ENCODE measurements at regions of chr6 and their contacts with region 1.

Region 1: DNA sequence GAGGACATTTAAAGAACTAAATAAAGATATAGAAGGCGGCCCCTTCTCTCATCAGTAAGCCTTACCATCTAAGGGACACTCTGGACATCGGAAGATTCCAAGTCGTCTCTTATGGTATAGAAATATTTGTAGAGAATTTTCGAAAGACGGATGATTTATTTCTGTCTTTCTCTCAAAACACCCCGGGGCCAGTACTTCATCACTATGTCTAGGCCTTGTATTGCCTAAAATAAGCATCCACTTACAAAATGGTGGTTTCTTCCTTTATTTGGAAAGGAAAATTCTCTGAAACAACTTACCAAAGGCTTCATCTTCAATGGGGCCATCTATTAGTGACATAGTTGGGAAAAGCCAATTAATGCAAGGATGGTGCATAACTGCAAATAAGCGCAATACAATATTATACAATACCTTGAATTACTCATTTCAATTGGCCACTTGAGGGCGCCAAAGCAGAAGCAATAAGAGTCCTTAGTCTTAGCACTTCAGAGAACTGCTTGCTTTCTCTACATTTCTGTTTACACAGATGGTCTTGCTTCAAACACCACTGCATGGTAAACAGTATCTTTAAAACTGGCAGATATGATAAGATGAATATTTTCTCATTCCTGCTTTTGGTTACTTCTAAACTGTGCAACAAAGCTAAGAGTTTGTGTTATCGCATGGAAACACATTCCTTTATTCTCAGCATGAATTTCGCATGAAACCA is 113.2 kb downstream of the VIP start:
- DNase-seq: peak in 1 of 2 experiments; percentile 29
- H3K4me3 ChIP-seq: no peak overlapping the region
- H3K27ac ChIP-seq: no peak overlapping the region
- H3K4me1 ChIP-seq: no peaks in the 10 kb centered on the region
- H3K27me3 ChIP-seq: no peaks in the 10 kb centered on the region
- CTCF ChIP-seq: peak; percentile 84

Region 2: DNA sequence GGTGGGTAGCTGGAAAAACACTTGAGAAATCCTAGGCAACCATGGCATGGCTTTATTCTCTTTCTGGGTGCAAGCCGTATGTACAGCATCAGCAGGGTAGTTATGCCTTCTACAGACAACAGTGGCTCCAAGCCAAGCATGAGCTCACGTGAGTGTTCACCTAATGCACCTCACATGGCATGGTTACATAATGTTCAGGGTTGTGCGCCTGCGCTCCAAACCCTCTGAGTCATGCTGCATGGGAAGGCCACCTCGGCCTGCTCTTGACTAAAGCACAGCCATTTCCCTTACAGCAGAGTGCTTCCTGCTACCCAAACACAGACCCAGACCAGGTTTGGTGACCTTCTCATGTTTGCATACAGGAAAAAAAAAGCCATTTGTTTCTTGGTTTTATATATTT is 16.9 kb before region 1 on chr6:
- CTCF ChIA-PET with region 1: no interaction called
- POLR2A ChIA-PET with region 1: no interaction called
- intact Hi-C with region 1: no loop called
- DNase-seq: no peak
- H3K4me3 ChIP-seq: no peak overlapping the region
- H3K27ac ChIP-seq: no peak overlapping the region
- H3K4me1 ChIP-seq: no peaks in the 10 kb centered on the region
- H3K27me3 ChIP-seq: no peaks in the 10 kb centered on the region
- CTCF ChIP-seq: no peak

Region 3: GRCh38 chr6:152916035-152916434 is 52.3 kb after region 1 on chr6:
- CTCF ChIA-PET with region 1: no interaction called
- POLR2A ChIA-PET with region 1: no interaction called
- intact Hi-C with region 1: no loop called
- DNase-seq: no peak
- H3K4me3 ChIP-seq: no peak overlapping the region
- H3K27ac ChIP-seq: no peak overlapping the region
- H3K4me1 ChIP-seq: no peaks in the 10 kb centered on the region
- H3K27me3 ChIP-seq: no peaks in the 10 kb centered on the region
- CTCF ChIP-seq: no peak

Region 4: GRCh38 chr6:153038378-153039057 is 174.7 kb after region 1 on chr6:
- CTCF ChIA-PET with region 1: no interaction called
- POLR2A ChIA-PET with region 1: no interaction called
- intact Hi-C with region 1: no loop called
- DNase-seq: no peak
- H3K4me3 ChIP-seq: no peak overlapping the region
- H3K27ac ChIP-seq: no peak overlapping the region
- H3K4me1 ChIP-seq: no peaks in the 10 kb centered on the region
- H3K27me3 ChIP-seq: no peaks in the 10 kb centered on the region
- CTCF ChIP-seq: no peak

Region 5: GRCh38 chr6:153312641-153313040 is 448.9 kb after region 1 on chr6:
- CTCF ChIA-PET with region 1: no interaction called
- POLR2A ChIA-PET with region 1: no interaction called
- intact Hi-C with region 1: loop called (anchors 5 kb)
- DNase-seq: peak in 1 of 2 experiments; percentile 46
- H3K4me3 ChIP-seq: no peak overlapping the region
- H3K27ac ChIP-seq: no peak overlapping the region
- H3K4me1 ChIP-seq: no peaks in the 10 kb centered on the region
- H3K27me3 ChIP-seq: no peaks in the 10 kb centered on the region
- CTCF ChIP-seq: peak; percentile 71

Measured in PC-9 (cell line).